Mucosa of descending colon (tissue), 3 donors: ENCODE measurements at regions of chr18 and their contacts with region 1.

Region 1: GRCh38 chr18:33404244-33404873 is 36.2 kb downstream of the CCDC178 start:
- DNase-seq: no peak
- ATAC-seq: no peak
- H3K4me3 ChIP-seq: no peak overlapping the region
- H3K4me1 ChIP-seq: no peaks in the 10 kb centered on the region
- CTCF ChIP-seq: no peak

Region 2: DNA sequence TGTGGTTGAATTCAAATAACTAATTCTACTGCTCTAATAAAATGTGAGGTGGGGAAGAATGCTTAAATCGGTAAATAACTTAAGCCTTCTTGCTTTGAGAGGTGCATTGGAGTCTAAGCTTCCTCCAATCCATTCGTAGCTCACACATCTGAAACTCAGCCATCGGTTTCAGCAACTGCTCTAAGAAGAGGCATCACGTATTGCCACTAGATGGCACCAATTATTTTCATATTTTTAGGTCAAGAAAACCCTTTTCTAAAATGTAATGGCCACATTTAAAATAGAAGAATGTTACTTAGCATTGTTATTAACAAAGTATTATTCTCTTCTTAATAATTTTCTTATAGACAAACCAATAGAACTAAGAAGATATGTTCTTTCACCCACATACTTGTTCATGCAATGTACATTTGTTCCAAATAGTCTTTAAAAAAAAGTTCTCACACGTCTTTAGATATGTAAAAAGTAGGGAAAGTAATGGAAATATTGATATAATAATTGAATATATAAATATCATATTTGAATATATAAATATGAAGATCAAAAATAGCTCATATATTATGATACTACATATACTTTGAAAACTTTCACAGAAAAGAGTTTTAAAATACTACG is 193.7 kb before region 1 on chr18:
- intact Hi-C with region 1: no loop called
- DNase-seq: peak in 1 of 3 donors; percentile 14
- ATAC-seq: no peak
- H3K4me3 ChIP-seq: no peak overlapping the region
- H3K4me1 ChIP-seq: no peaks in the 10 kb centered on the region
- CTCF ChIP-seq: no peak

Region 3: GRCh38 chr18:33761363-33761762 is 357.0 kb after region 1 on chr18:
- intact Hi-C with region 1: loop called in 1 of 2 experiments (anchors 10 kb)
- DNase-seq: peak in 1 of 3 donors; percentile 74
- ATAC-seq: no peak
- H3K4me3 ChIP-seq: no peak overlapping the region
- H3K4me1 ChIP-seq: peaks cover under 1% of the 10 kb centered on the region
- CTCF ChIP-seq: peak; percentile 14